ENCODE measurements at regions of chr16 and their contacts with region 1.

Region 1: DNA sequence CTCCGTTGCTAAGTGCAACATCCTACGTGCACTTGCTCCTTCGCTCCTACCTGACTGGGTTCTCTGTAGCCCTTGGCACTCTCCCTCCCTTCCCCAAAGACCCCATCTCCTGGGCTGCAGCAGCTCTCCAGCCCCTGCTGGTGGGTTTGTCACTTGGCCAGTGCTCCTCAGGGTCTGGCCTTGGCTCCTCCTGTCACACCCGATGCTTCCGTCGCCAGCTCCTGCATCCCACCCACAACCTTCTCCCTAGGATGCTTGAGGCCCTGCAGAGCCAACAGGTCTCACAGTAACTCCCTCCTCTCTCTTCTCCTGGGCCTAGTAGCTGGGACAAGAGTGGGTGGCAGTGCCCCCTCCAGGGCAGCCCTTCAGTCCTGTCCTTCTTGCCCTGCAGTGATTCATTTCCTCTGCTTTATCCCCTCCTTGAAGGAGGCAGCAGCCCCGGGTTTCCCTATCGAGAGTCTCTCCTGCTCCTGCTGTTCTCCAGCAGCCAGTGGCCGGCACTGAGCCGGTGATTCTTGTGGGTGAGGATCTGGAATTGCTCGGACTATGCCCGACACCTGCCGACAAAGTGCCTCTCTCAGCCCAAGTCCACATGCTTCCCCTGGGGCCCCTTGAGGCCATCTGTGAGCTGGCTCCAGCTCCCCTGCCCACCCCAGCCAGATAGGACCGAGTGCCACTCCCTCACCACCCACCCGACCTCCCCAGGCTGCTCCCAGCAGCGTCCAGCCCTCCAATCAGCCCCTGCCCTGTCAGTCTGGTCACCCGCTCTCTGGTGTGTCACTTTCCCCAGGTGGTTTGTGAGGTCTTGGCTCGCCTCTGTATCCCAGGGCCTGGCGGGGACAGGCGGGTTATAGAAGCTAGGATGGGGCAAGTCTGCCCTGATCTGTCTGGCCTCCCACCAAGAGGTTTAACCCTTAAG is 3.8 kb downstream of the LITAFD start:
- DNase-seq: no peak
- H3K4me3 ChIP-seq: no peak overlapping the region
- H3K27ac ChIP-seq: no peak overlapping the region
- H3K4me1 ChIP-seq: peaks cover 5% of the 10 kb centered on the region
- H3K27me3 ChIP-seq: no peaks in the 10 kb centered on the region
- CTCF ChIP-seq: no peak
- POLR2A ChIP-seq: no peak

Region 2: GRCh38 chr16:8407351-8407750 is 478.6 kb before region 1 on chr16:
- intact Hi-C with region 1: no loop called
- DNase-seq: no peak
- H3K4me3 ChIP-seq: no peak overlapping the region
- H3K27ac ChIP-seq: no peak overlapping the region
- H3K4me1 ChIP-seq: no peaks in the 10 kb centered on the region
- H3K27me3 ChIP-seq: no peaks in the 10 kb centered on the region
- CTCF ChIP-seq: no peak
- POLR2A ChIP-seq: no peak

Region 3: DNA sequence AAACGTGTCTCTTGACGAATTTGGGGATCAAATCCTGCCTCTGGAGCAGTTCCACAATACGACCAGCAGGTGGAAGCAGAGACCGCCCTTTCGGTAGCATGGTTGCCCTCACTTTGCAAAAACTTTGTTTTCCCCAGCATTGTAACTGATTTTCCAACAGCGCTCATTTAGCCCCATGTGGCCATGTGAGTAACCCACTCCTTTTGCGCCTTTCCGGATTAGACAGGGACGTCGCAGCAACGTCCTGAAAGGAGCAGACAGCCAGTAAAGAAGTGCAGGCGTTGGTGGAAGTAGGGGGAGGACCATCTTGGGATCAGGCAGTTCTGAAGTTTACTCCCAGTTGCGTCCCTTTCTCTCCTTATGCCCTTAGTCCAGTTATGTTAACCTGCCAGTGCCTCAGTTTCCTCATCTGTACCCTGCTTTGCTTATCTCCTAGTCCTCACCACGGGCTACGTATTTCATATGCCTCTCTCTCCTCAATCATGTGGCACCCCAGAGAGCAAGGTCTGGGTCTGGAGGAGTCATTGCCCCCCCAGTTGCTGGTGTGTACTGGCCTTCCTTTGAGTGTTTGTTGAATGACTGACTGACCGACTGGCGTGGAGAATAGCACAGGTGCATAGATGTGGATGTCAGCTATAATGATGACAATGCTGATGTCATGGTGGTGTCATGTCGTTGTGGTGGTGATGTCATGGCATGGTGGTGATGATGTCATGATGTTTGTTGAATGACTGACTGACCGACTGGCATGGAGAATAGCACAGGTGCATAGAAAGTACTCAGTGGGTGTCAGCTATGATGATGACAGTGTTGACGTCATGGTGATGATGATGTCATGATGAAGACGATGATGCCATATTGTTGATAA is 317.9 kb before region 1 on chr16:
- intact Hi-C with region 1: loop called (anchors 10 kb)
- DNase-seq: peak; percentile 79
- H3K4me3 ChIP-seq: no peak overlapping the region
- H3K27ac ChIP-seq: no peak overlapping the region
- H3K4me1 ChIP-seq: no peaks in the 10 kb centered on the region
- H3K27me3 ChIP-seq: no peaks in the 10 kb centered on the region
- CTCF ChIP-seq: peak; percentile 92 to 99 (median 98)
- POLR2A ChIP-seq: no peak

Region 4: DNA sequence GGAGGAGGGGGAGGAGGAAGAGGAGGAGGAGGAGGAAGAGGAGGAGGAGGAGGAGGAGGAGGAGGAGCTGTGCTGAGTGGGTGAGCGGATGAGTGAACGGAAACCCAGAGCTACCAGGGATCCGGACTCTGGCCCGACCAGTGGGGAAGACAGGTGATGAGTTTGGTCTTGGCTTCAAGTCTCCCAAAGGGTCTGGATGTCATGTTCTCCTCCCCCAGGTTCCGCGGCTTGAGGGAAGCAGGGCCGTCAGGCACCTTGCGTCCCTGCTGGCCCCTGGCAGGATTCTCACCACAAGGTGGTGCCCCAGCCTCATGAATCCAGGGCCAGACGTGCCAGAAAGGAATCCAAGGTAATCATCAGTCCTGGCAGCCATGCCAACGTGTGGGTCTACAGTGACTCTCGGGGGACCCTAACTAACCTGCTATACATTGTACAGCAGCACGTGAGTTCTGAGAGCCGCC is 225.1 kb before region 1 on chr16:
- intact Hi-C with region 1: loop called (anchors 5 kb)
- DNase-seq: peak; percentile 75
- H3K4me3 ChIP-seq: no peak overlapping the region
- H3K27ac ChIP-seq: no peak overlapping the region
- H3K4me1 ChIP-seq: no peaks in the 10 kb centered on the region
- H3K27me3 ChIP-seq: no peaks in the 10 kb centered on the region
- CTCF ChIP-seq: peak; percentile 50 to 71 (median 65)
- POLR2A ChIP-seq: no peak

Measured in testis (tissue), 5 donors.